Right ventricle myocardium superior (tissue), 1 donor: ENCODE measurements at regions of chr5 and their contacts with region 1.

Region 1: DNA sequence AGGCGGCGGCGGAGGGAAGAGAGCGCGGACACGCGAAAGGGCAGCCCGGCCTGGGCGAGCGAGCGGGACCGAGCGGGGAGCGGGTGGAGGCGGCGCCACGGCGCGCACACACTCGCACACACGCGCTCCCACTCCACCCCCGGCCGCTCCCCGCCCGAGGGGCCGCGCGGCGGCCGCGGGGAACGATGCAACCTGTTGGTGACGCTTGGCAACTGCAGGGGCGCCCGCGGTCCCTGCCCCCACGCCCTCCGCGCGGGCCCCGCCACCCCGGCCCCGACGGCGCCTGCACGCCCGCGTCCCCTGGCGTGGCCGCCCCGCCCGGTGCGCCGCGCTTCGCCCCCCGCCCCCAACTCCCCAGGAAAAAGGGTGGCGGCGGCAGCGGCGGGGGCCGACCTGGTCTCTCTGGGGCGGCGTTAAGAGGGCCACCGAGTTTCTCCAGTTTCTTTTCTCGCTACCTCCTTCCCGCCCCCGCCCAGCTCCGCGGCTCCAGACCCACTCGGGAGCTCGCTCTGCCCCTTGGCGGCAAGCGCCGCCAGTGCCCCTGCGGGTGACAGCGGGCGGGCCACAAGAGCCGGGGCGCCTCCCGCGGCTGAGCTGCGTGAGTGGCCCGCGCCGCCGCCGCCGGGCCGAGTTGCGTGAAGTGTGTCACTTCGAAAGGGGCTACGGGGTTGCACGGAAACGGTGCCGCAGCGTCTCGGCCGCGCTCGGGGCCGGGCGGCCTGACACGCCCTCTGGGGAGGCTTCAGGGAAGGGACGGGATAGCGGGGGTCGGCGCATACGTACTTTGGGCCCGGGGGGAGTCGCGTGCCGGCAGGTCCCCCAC is at the start of gene NR3C1:
- DNase-seq: peak; percentile 93
- ATAC-seq: peak; percentile 82
- total RNA-seq, gene NR3C1: 48.9 TPM

Region 2: DNA sequence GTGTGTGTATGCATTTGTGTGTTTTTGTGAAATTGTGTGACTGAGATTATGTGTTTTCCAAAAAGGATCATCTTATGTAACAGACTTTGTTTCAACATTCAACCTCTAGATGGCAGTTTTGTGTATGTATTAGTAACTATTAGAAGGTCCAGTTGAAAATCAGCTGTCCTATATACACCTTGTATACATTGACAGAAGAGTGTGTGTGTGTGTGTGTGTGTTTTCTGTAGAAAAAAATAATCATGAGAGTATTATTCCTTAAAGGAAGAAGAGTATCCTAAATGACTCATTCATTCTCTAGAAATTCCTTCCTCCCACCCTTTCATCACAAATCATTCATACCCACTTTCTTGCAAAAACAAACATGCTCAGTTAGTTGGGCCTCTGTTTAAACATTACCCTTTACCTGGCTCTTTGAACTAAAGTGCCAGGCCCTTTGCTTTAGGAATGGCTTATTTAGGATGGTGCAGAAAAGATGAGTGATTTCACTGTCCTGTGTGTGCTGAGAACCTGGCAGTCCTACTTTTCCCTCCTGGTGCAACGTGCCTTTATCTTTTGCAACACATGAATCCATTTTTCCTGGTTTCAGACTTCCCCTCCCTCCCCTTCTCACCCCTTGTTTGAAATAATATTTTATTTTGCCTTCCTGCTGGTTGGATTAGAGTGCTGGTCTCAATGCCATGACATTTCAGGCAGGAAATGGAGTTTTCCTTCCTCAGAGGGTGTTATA is 481.4 kb before region 1 on chr5:
- intact Hi-C with region 1: loop called (anchors 5 kb)
- DNase-seq: no peak
- ATAC-seq: peak; percentile 65

Region 3: DNA sequence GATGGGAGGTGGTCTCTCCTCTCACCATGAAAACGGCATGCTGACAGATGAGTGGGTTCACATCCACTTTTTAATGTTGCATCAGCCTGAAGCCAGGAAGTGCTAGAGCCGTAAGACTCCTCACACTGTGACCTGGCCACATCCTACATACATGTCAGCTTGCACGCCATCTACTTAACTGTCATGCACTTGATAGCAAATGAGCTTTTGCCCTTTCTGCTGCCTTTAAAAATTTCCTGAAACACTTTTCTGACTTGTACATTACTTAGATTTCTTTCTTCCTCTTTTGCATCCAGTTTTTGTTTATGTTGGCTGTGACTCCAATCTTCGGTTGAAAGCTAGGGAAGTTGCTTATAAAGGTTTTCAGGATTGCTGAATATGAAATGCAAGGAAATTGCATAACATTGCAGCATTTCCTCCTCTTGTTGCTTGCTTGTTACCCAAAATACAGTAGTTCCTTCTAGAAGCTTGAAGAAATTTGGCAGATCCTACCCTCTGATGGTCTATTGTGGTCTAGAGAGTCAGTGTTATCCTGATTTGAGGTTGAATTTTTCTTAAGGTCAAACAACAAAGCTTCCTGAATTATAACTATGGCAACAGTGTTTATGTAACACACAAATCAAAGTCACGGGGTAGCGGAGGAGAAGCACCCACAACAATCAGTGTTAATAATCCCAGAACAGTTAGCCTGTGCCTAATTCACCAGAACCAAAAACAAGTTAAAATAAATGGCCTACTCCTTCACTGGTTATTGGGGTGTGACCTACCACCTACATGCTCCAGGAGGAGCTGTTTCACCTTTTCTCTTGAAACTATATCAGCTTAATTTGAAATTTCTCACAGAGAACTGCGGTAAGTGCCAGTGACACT is 401.1 kb before region 1 on chr5:
- intact Hi-C with region 1: loop called (anchors 10 kb)
- DNase-seq: no peak
- ATAC-seq: peak; percentile 71

Region 4: GRCh38 chr5:143824851-143825720 is 421.3 kb after region 1 on chr5:
- intact Hi-C with region 1: loop called (anchors 5 kb)
- DNase-seq: peak; percentile 86
- ATAC-seq: peak; percentile 98